ENCODE measurements at regions of chr3 and their contacts with region 1.

Region 1: DNA sequence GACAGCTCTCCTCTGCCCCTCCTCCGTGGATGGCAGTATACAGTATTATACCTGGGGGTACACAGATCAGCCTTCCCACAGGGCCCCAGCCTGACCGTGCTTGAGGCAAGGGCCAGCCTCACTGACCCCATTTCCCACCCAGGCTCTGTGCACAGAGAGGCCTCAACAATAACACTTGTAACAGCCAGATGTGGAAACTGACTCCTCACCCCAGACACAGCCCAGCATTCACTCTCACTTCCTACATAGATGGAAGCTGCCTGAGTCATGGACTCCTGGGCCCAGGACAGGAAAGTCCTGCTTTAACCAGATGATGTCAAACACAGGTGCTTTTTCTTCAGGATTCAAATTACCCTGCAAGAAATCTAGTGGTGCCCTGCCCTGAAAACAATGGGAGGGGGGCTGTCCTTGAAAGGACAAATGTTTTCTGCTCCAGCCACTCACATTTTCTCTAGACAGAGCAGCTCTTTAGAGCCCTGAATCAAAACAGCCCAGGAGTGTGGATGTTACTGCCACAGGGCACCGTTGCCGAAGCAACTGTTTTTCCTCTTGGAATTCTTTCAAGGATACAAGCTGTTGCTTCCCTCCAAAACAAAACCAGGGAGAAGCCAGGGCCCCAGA is 16.4 kb downstream of the CCDC12 start:
- DNase-seq: no peak
- H3K4me3 Mint-ChIP-seq: no peak overlapping the region
- H3K27ac Mint-ChIP-seq: peak overlapping the region; percentile 46
- H3K4me1 Mint-ChIP-seq: peaks cover 70% of the 10 kb centered on the region
- H3K27me3 Mint-ChIP-seq: no peaks in the 10 kb centered on the region

Region 2: DNA sequence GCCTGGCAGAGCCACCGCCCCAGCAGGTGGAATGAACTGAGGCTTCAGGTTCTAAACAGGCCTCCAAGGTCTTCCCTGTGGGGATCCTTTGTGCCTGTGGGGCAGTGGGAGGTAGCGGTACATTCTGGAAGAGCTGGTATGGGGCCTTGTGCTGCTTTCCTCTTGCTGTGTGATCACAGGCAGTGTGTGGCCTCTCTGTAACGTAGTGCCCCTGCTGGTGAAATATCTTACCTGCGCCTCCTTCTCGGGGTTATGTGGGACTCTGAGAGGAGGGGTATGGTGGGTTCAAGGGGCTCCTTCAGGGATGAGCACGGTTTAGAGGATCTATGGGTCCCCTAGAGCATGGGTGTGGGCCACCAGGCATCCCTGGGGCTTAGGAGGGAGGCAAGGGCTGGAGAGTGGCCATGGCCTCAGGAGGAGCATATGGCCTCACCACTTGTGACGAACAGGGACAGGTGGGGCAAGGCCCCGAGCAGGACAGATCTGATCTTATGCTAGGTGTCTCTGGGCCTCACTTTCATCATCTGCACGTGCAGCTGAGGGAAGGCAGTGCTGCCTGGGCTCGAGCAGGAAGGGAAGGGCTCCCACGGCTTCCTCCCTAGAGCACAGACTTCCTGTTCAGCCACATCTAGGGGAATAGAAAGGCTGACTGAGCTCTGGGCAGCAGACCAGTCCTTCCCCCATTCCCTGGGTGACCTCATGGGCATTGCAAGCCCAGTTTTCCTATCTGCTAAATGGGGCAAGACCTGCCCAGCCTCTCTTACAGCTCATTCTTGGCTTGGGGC is 264.8 kb before region 1 on chr3:
- CTCF ChIA-PET with region 1: no interaction called
- POLR2A ChIA-PET with region 1: no interaction called
- DNase-seq: peak; percentile 51
- H3K4me3 Mint-ChIP-seq: peak overlapping the region; percentile 15
- H3K27ac Mint-ChIP-seq: peak overlapping the region; percentile 88
- H3K4me1 Mint-ChIP-seq: peaks cover 52% of the 10 kb centered on the region
- H3K27me3 Mint-ChIP-seq: peaks cover 8% of the 10 kb centered on the region

Region 3: DNA sequence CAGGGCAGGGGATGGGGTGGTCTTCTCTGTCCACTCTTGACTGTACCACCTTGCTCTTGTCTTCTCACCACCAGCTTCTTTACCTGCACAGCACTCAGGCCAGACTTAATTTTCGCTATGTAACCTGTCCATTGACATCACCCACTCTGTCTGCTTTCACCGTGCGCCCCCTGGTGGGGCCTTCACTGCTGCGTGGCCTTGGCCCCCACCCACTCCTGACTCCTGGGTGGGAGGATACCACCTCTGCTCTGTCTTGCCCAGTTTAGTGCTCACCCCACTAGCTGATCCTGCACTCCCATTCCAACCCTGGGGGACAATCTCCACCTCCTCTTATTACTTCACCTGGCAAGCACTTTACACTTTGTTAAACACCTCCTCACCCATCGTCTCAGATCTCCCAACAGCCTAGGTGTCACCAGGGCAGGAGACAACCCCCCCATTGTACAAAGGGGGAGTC is 65.0 kb before region 1 on chr3:
- CTCF ChIA-PET with region 1: no interaction called
- POLR2A ChIA-PET with region 1: no interaction called
- DNase-seq: peak; percentile 79
- H3K4me3 Mint-ChIP-seq: no peak overlapping the region
- H3K27ac Mint-ChIP-seq: no peak overlapping the region
- H3K4me1 Mint-ChIP-seq: peaks cover 18% of the 10 kb centered on the region
- H3K27me3 Mint-ChIP-seq: peaks cover 55% of the 10 kb centered on the region

Region 4: GRCh38 chr3:46970391-46971091 is 10.3 kb after region 1 on chr3:
- CTCF ChIA-PET with region 1: interaction called, 11 read pairs
- POLR2A ChIA-PET with region 1: no interaction called
- DNase-seq: no peak
- H3K4me3 Mint-ChIP-seq: no peak overlapping the region
- H3K27ac Mint-ChIP-seq: peak overlapping the region; percentile 79
- H3K4me1 Mint-ChIP-seq: peaks cover 90% of the 10 kb centered on the region
- H3K27me3 Mint-ChIP-seq: no peaks in the 10 kb centered on the region

Region 5: DNA sequence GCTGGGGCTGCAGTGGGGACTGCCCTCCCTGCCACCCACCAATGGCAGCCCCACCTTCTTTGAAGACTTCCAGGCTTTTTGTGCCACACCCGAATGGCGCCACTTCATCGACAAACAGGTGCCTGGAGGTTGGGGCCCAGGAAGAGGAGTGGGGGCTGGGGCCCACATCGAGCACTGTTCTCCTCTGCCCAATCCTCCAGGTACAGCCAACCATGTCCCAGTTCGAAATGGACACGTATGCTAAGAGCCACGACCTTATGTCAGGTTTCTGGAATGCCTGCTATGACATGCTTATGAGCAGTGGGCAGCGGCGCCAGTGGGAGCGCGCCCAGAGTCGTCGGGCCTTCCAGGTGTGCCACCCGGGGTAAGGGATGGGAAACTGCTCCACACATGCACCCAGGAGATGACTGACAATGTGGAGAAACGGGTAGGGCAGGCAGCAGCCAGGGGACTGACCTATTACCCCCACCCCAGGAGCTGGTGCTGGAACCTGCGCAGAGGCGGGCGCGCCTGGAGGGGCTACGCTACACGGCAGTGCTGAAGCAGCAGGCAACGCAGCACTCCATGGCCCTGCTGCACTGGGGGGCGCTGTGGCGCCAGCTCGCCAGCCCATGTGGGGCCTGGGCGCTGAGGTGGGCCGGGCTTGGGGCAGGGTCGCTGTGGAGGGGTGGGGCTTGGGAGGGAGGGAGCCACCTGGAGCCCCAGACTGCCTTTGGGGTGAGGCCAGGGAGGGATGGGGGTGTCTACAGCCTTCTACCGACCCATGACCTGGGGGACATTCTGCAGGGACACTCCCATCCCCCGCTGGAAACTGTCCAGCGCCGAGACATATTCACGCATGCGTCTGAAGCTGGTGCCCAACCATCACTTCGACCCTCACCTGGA is 42.2 kb after region 1 on chr3:
- CTCF ChIA-PET with region 1: no interaction called
- POLR2A ChIA-PET with region 1: no interaction called
- DNase-seq: no peak
- H3K4me3 Mint-ChIP-seq: no peak overlapping the region
- H3K27ac Mint-ChIP-seq: no peak overlapping the region
- H3K4me1 Mint-ChIP-seq: peaks cover 6% of the 10 kb centered on the region
- H3K27me3 Mint-ChIP-seq: no peaks in the 10 kb centered on the region